Mammary epithelial cell (primary cell): ENCODE measurements at regions of chr12 and their contacts with region 1.

Region 1: GRCh38 chr12:109880016-109880931 is at the start of gene GLTP:
- DNase-seq: peak; percentile 83
- H3K4me3 ChIP-seq: peak within 1 kb of the TSS; percentile 77 to 86 (median 83)
- H3K27ac ChIP-seq: peak within 1 kb of the TSS; percentile 72
- H3K4me1 ChIP-seq: peaks cover 31% of the 10 kb centered on the region
- H3K27me3 ChIP-seq: no peaks in the 10 kb centered on the region
- CTCF ChIP-seq: peak; percentile 41 to 44
- total RNA-seq, gene GLTP: 60.2 to 63.8 TPM

Region 2: GRCh38 chr12:109763201-109763841 is 117.0 kb before region 1 on chr12:
- CTCF ChIA-PET with region 1: no interaction called
- dilution Hi-C with region 1: no loop called
- in situ Hi-C with region 1: no loop called
- intact Hi-C with region 1: no loop called
- DNase-seq: peak; percentile 84
- H3K4me3 ChIP-seq: no peak overlapping the region
- H3K27ac ChIP-seq: no peak overlapping the region
- H3K4me1 ChIP-seq: peaks cover 3% of the 10 kb centered on the region
- H3K27me3 ChIP-seq: no peaks in the 10 kb centered on the region
- CTCF ChIP-seq: no peak

Region 3: DNA sequence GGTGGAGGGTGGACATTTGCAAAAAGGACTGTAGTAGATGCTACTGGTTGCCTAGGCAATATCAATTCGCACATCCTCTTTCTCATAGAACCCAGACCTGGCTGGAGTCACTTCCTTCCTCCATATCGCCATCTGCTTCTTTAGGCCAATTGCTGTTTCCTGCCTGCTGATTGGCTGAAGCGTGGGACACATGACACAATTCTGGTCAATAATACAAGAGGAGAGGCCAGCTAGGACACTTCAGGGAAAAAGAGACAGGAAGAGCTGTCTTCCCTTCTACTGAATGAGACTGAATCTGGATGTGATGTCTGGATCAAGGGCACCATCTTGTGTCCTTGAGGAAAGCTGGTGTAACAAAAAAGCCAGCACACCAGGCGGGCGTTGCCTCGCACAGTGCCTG is 100.9 kb before region 1 on chr12:
- CTCF ChIA-PET with region 1: no interaction called
- dilution Hi-C with region 1: no loop called
- in situ Hi-C with region 1: no loop called
- intact Hi-C with region 1: no loop called
- DNase-seq: no peak
- H3K4me3 ChIP-seq: no peak overlapping the region
- H3K27ac ChIP-seq: no peak overlapping the region
- H3K4me1 ChIP-seq: peaks cover 6% of the 10 kb centered on the region
- H3K27me3 ChIP-seq: no peaks in the 10 kb centered on the region
- CTCF ChIP-seq: no peak

Region 4: DNA sequence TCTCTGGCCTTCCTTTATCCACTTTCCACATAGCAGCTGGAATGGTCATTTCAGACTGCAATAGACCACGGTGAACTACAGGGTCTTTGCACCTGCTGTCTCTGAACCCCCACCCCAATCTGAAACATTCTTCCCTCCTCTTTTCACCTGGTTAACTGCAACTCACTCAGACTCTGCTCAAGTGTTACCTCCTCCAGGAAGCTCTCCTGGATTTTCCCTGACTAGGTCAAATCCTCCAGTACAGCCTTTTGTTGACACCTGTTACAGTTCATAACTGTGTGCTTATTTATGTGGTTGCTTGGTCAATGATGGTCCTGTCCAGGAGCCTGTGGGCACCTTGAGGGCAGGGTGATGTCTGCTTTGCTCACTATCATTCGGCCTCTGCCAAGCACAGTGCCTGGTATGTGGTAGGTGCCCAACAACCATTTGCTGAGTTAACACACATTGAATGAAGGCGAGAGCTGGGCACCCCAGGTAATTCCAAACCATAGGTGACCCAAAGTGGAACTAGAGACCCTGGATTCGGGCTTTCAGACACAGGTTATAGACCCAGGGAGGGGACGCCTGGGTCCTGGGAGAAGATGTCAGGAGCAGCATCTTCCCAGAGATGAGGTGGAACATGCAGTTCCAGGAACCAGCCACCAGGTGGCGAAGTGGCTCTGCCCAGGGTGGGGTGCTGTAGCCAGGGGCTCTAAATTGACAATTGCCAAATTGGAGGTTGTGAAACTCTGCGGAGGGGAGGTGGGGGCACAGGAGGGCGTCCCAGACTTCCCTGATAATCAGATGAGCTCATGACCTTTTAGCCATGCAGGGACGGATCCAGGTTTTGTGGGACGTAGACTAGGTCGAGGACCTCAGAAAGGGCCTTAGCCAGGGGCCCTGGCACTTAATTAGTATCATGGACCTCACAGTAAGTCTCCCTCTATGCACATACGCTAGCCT is 75.2 kb before region 1 on chr12:
- CTCF ChIA-PET with region 1: no interaction called
- dilution Hi-C with region 1: no loop called
- in situ Hi-C with region 1: no loop called
- intact Hi-C with region 1: loop called (anchors 1 kb)
- DNase-seq: peak; percentile 35
- H3K4me3 ChIP-seq: no peak overlapping the region
- H3K27ac ChIP-seq: no peak overlapping the region
- H3K4me1 ChIP-seq: no peaks in the 10 kb centered on the region
- H3K27me3 ChIP-seq: no peaks in the 10 kb centered on the region
- CTCF ChIP-seq: peak; percentile 97 to 98

Region 5: DNA sequence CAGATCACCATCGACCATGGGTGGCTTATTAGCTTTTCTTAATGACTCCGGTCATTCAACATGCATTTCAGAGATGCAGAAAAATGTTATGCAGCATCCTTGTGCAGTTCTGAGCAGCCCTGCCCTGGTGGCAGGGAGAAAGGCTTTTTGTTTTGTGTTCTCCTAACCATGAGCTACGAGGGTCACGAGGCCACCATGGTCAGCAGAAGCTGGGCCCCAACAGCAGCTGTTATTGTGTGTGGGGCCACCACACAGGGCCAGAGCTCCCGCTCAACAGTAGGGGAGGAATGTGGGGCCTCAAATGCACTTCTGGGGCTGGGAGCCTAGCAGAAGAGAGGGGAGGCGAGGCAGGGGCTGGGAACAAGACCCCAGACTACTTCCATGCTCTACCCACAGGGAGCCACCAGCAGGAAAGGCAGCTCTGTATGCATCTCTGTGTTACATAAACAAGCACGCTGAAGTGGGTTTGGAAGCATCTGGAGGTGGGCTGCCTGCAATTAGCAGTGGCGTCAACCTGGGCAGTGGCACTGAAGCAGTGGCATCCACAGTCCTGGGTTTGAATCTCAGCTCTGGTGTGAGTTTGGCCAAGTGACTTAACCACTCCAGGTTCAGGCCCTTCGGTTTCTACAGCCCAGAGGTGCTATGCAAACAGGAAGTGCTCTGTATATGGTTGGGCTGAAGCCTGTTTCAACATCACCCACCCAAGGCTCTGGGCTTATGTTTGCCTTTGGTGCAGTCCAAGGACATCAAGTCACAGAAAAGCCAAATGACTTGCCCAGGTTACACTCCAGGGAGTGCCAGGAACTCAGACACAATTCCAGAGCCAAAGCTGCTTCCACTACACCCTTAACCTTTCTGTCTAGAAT is 16.2 kb before region 1 on chr12:
- CTCF ChIA-PET with region 1: no interaction called
- dilution Hi-C with region 1: no loop called
- in situ Hi-C with region 1: no loop called
- intact Hi-C with region 1: loop called (anchors 2 kb)
- DNase-seq: no peak
- H3K4me3 ChIP-seq: no peak overlapping the region
- H3K27ac ChIP-seq: peak overlapping the region; percentile 52
- H3K4me1 ChIP-seq: peaks cover 18% of the 10 kb centered on the region
- H3K27me3 ChIP-seq: no peaks in the 10 kb centered on the region
- CTCF ChIP-seq: no peak

Region 6: DNA sequence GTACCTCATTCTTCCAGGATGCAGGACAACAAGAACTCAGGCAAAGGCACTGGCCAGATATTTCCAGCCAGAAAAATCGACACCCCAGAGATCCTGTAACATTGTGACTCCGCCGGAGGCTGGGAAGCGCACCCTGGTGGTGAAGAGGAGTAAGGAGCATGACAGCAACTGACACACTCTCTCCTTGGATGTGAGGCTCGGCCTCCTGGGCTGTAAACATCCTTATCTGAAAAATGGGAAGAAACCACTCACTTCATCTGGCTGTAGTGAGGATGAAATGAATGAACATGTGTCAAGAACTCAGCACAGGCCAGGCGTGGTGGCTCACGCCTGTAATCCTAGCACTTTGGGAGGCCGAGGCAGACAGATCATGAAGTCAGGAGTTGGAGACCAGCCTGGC is 47.3 kb after region 1 on chr12:
- CTCF ChIA-PET with region 1: no interaction called
- dilution Hi-C with region 1: no loop called
- in situ Hi-C with region 1: no loop called
- intact Hi-C with region 1: loop called (anchors 1 kb)
- DNase-seq: no peak
- H3K4me3 ChIP-seq: no peak overlapping the region
- H3K27ac ChIP-seq: no peak overlapping the region
- H3K4me1 ChIP-seq: no peaks in the 10 kb centered on the region
- H3K27me3 ChIP-seq: no peaks in the 10 kb centered on the region
- CTCF ChIP-seq: peak; percentile 79 to 84

Region 7: DNA sequence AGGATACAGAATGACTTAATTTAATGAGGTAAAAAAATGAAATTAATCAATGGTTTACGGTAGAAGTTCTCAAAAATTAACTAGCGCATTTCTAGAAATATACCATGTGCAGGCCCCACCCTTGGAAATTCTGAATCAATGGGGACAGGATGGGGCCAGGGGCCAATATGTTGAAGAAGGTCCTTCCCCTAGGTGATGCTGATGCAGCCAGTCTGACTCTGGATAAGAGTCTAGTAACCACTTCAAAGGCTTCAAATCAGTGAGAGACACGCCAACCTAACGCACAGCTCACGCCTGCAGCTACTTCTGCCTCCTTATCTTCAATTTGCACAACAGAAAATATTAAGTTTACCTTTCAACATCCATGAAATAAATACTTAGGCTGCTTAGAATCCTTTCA is 101.0 kb after region 1 on chr12:
- CTCF ChIA-PET with region 1: no interaction called
- dilution Hi-C with region 1: no loop called
- in situ Hi-C with region 1: no loop called
- intact Hi-C with region 1: no loop called
- DNase-seq: no peak
- H3K4me3 ChIP-seq: no peak overlapping the region
- H3K27ac ChIP-seq: no peak overlapping the region
- H3K4me1 ChIP-seq: no peaks in the 10 kb centered on the region
- H3K27me3 ChIP-seq: no peaks in the 10 kb centered on the region
- CTCF ChIP-seq: no peak